GM12878 (cell line): ENCODE measurements at regions of chr2 and their contacts with region 1.

Region 1: GRCh38 chr2:216034065-216034464 is 20.7 kb upstream of the MREG start:
- DNase-seq: peak; percentile 67
- ATAC-seq: peak; percentile 65
- H3K4me3 ChIP-seq: no peak overlapping the region
- H3K27ac ChIP-seq: peak overlapping the region; percentile 83
- H3K4me1 ChIP-seq: peaks cover 32% of the 10 kb centered on the region
- H3K27me3 ChIP-seq: no peaks in the 10 kb centered on the region
- CTCF ChIP-seq: peak; percentile 77 to 94 (median 84)
- EP300 ChIP-seq: no peak
- POLR2A ChIP-seq: no peak
- RAD21 ChIP-seq: peak; percentile 75

Region 2: DNA sequence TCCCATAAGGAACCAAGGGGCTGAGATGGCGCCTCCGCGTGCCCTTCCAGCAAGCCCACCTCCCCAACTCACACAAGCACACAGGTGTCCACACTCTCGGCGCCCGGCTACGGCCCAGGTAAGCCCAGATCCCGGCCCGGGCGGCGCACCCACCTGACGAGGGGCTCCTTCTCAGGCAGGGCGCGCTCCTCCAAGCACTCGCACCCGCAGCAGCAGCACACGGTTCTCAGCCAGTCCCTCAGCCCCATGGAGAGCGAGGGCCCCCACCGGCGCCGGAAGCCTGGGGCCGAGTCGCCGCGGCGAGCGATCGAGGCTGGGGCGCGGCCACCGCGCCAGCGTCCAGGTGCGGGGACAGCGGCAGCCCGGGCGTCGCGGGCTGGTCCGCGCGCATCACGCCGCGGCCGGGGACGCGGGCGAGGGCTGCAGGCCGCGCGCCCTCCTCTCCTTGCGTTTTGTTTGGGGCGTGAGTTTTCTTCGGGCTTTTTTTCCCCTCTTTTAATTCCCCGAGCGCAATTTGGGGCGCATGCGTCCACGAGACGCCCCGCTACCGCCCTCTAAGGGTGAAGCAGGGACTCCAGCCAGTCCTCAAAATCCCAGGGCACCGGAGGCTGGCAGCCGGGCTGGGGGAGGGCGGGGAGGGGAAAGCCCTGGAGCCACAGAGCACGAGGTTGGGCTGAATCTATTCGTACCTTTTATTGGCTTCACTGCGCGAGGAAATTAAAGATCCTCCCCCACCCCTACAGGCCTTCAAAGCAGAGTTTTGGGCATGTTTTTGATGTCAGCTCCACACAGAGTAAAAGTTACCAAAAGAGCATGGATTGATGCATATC is 20.8 kb before region 1 on chr2 and contains the start of gene MREG:
- CTCF ChIA-PET with region 1: interaction called, 88 read pairs
- POLR2A ChIA-PET with region 1: interaction called, 18 read pairs
- RAD21 ChIA-PET with region 1: interaction called, 45 read pairs
- SMC1A ChIA-PET with region 1: interaction called, 64 read pairs
- in situ Hi-C with region 1: no loop called
- intact Hi-C with region 1: no loop called
- DNase-seq: no peak
- ATAC-seq: peak; percentile 45
- H3K4me3 ChIP-seq: peak within 1 kb of the TSS; percentile 94
- H3K27ac ChIP-seq: peak within 1 kb of the TSS; percentile 93
- H3K4me1 ChIP-seq: peaks cover 31% of the 10 kb centered on the region
- H3K27me3 ChIP-seq: no peaks in the 10 kb centered on the region
- CTCF ChIP-seq: peak; percentile 74 to 88 (median 78)
- EP300 ChIP-seq: no peak
- POLR2A ChIP-seq: peak; percentile 86
- RAD21 ChIP-seq: peak; percentile 54
- polyA plus RNA-seq, gene MREG: 16.8 to 21.3 TPM

Region 3: GRCh38 chr2:216057688-216058193 is 23.7 kb after region 1 on chr2:
- CTCF ChIA-PET with region 1: interaction called, 89 read pairs
- POLR2A ChIA-PET with region 1: interaction called, 8 read pairs
- RAD21 ChIA-PET with region 1: interaction called, 34 read pairs
- SMC1A ChIA-PET with region 1: interaction called, 55 read pairs
- in situ Hi-C with region 1: no loop called
- intact Hi-C with region 1: loop called (anchors 1 kb)
- DNase-seq: peak; percentile 96
- ATAC-seq: peak; percentile 93
- H3K4me3 ChIP-seq: peak overlapping the region; percentile 62
- H3K27ac ChIP-seq: peak overlapping the region; percentile 85
- H3K4me1 ChIP-seq: peaks cover 24% of the 10 kb centered on the region
- H3K27me3 ChIP-seq: no peaks in the 10 kb centered on the region
- CTCF ChIP-seq: no peak
- EP300 ChIP-seq: peak; percentile 55 to 66; a peak in 2 of 4 replicates
- POLR2A ChIP-seq: peak; percentile 68; the same call in 1 of the 2 replicates
- RAD21 ChIP-seq: no peak

Region 4: DNA sequence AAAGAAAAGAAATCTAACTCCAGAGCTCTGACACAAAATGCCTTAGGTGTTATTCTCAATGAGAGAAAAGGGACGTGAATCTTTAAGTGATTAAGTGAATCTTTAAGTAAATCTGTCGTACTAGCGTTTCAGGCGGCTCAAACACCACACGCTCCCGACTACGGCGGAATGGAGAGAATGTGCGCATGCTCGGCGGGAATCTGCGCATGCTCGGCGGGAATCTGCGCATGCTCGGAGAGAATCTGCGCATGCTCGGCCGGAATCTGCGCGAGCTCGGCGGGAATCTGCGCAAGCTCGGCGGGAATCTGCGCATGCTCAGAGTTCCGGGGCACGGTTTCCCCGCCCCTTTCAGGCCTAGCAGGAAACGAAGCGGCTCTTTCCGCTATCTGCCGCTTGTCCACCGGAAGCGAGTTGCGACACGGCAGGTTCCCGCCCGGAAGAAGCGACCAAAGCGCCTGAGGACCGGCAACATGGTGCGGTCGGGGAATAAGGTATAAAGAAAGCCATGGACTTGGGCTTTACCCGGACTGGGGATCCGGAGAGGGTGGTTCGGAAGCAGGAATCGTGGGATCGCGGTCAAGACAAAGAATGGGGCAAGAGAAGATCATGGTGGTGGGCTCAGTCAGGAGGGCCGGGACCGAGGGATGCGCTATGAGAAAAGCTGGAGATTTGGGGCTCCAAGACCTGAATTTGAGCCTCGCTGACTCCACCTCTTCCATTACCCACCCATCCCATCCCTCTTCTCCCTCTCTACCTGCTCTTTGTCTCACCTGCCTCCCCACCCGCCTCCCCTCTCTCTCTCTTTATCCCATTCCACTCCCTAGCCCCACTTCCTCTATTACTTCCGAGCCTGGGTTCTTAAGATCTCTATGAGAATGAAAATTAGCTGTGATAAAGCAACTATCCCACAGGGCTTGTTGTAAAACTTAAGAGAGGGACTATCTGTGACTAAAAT is 75.2 kb after region 1 on chr2 and contains the start of gene XRCC5:
- CTCF ChIA-PET with region 1: interaction called, 105 read pairs
- POLR2A ChIA-PET with region 1: interaction called, 23 read pairs
- RAD21 ChIA-PET with region 1: interaction called, 15 read pairs
- SMC1A ChIA-PET with region 1: interaction called, 43 read pairs
- in situ Hi-C with region 1: no loop called
- intact Hi-C with region 1: loop called (anchors 1 kb)
- DNase-seq: peak; percentile 96
- ATAC-seq: peak; percentile 57
- H3K4me3 ChIP-seq: peak within 1 kb of the TSS; percentile 94
- H3K27ac ChIP-seq: peak within 1 kb of the TSS; percentile 99
- H3K4me1 ChIP-seq: peaks cover 26% of the 10 kb centered on the region
- H3K27me3 ChIP-seq: no peaks in the 10 kb centered on the region
- CTCF ChIP-seq: no peak
- EP300 ChIP-seq: no peak
- POLR2A ChIP-seq: peak; percentile 94
- RAD21 ChIP-seq: no peak
- polyA plus RNA-seq, gene XRCC5: 552 to 556 TPM

Region 5: DNA sequence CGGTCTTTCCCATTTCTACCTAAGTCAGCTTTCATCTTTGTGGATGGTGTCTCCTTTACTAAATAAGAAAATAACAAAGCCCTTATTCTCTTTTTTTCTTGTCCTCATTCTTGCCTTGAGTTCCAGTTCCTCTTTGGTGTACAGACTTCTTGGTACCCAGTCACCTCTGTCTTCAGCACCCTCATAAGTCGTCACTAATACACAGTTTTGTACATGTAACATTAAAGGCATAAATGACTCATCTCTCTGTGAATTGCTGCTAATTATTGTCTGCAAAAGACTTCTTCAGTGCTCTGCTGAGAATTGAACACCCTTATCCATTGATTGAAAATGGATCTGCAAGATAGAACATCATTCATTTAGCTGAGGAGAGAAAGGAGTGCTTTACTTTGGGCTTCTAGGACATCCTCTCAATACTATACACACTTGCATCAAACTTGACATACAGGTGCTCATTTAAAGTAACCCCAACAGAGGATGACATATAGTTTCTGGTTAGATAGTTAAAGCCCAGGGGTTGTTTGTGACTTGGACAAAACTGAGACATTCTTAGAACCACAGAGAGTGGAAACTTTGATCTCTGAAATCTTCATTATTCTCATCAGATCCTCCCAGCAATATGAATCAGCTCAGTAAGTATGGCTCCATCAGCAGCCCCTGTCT is 172.1 kb after region 1 on chr2:
- CTCF ChIA-PET with region 1: no interaction called
- POLR2A ChIA-PET with region 1: no interaction called
- RAD21 ChIA-PET with region 1: no interaction called
- SMC1A ChIA-PET with region 1: no interaction called
- in situ Hi-C with region 1: no loop called
- intact Hi-C with region 1: loop called (anchors 10 kb)
- DNase-seq: peak; percentile 54
- ATAC-seq: peak; percentile 90
- H3K4me3 ChIP-seq: no peak overlapping the region
- H3K27ac ChIP-seq: peak overlapping the region; percentile 49
- H3K4me1 ChIP-seq: peaks cover 29% of the 10 kb centered on the region
- H3K27me3 ChIP-seq: no peaks in the 10 kb centered on the region
- CTCF ChIP-seq: no peak
- EP300 ChIP-seq: peak; percentile 64 to 91; a peak in 2 of 4 replicates
- POLR2A ChIP-seq: no peak
- RAD21 ChIP-seq: no peak